Dorsolateral prefrontal cortex (tissue), 120 donors: ENCODE measurements at regions of chr1 and their contacts with region 1.

Region 1: GRCh38 chr1:169122976-169123375 is 16.5 kb downstream of the ATP1B1 start:
- DNase-seq: no peak
- H3K4me3 ChIP-seq: peak overlapping the region in 2 of 59 donors; percentile 1 to 29
- H3K27ac ChIP-seq: peak overlapping the region in 24 of 59 donors; percentile 4 to 72 (median 30)
- H3K27me3 ChIP-seq: no peaks in the 10 kb centered on the region
- CTCF ChIP-seq: no peak

Region 2: DNA sequence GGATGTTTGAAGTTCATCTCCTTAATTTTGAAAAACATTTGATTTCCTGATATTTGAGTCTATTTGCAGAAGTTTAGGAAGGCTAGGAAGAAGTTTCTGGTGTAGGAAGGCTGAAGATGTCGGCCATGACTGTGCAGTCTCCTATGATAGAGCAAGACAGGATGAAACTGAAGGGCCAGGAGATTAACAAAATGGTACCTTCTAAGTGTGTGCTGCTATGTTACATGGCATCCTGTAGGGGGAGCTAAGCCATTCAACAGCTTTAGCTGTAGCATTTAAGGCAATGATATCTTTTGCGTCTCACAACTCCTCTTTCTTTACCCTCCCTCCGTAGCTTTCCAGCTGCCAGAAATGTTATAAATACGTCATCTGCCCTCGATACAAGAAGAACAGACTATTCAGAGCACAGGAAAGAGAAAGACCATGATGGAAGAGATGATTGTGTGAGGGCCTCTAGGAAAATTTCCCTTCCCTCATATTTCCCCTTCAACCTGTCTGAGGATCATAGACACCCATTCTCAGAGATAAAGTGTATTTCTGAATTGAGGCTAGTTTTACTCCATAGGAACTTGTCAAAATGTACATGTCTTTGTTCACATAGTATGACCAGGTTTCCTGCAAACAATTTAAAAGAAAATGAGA is 485.5 kb before region 1 on chr1:
- intact Hi-C with region 1: no loop called
- DNase-seq: no peak
- H3K4me3 ChIP-seq: no peak overlapping the region
- H3K27ac ChIP-seq: peak overlapping the region in 46 of 59 donors; percentile 0 to 84 (median 64)
- H3K27me3 ChIP-seq: no peaks in the 10 kb centered on the region
- CTCF ChIP-seq: peak; percentile 43 to 83 (median 64)

Region 3: GRCh38 chr1:168803806-168804510 is 319.0 kb before region 1 on chr1:
- intact Hi-C with region 1: loop called in 1 of 2 experiments (anchors 10 kb)
- DNase-seq: peak in 7 of 10 donors; percentile 17 to 60 (median 41)
- H3K4me3 ChIP-seq: peak overlapping the region in 2 of 59 donors; percentile 13 to 26
- H3K27ac ChIP-seq: peak overlapping the region in 2 of 59 donors; percentile 41 to 47
- H3K27me3 ChIP-seq: no peaks in the 10 kb centered on the region
- CTCF ChIP-seq: peak in 19 of 56 donors; percentile 2 to 52 (median 26)